Transverse colon (tissue), 4 donors: ENCODE measurements at regions of chr12 and their contacts with region 1.

Region 1: DNA sequence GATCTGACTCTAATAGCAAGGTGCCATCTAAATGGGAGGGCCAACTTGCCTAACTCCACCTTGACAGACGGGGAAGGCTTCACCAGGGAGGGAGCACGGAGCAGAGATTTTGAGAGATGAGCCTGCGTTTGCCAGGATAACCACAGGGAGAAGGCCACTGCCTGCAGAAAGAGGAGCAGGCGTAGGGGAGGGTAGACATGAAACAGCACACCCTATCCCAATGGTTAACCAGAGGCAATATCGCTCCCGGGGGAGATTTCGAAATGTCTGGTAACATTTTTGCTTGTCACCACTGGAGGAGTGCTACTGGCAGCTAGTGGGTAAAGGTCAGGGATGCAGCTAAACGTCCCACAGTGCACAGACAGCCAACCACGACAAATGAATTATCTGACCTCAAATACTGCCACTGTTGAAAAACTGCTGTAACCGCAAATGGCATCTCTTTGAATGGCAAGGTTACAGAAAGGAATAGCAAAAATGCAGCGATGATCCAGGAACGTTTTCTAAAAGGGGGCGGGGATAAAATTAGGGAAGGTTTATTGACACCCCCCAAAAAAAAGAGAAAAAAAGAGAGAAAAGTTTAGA is 126.0 kb upstream of the ATF7IP start:
- DNase-seq: no peak
- H3K4me3 ChIP-seq: no peak overlapping the region
- H3K27ac ChIP-seq: peak overlapping the region; percentile 28 to 54 (median 38)
- H3K4me1 ChIP-seq: peaks cover 0 to 8% (median 4%) of the 10 kb centered on the region in 4 donors
- H3K27me3 ChIP-seq: no peaks in the 10 kb centered on the region
- CTCF ChIP-seq: no peak
- EP300 ChIP-seq: no peak
- POLR2A ChIP-seq: no peak

Region 2: DNA sequence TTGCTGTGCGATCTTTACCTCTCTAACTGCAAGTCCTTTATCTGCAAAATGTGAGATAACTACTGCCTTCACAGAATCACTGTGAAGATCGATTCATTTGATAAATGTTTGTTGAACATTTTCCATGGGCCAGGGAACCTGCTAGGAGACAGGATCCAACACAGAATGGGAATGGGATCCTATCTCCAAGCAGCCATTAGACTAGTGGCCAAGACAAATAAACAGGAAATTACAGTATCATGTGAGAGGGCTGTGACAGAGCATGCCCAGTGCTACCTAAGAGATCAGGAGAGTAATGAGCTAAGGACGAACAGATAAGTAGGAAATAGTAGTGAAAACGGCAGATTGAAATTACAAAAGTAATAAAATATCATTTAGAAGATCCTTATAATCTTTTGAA is 363.7 kb before region 1 on chr12:
- in situ Hi-C with region 1: no loop called
- intact Hi-C with region 1: no loop called
- DNase-seq: no peak
- H3K4me3 ChIP-seq: no peak overlapping the region
- H3K27ac ChIP-seq: no peak overlapping the region
- H3K4me1 ChIP-seq: no peaks in the 10 kb centered on the region
- H3K27me3 ChIP-seq: no peaks in the 10 kb centered on the region
- CTCF ChIP-seq: no peak
- EP300 ChIP-seq: no peak
- POLR2A ChIP-seq: no peak

Region 3: DNA sequence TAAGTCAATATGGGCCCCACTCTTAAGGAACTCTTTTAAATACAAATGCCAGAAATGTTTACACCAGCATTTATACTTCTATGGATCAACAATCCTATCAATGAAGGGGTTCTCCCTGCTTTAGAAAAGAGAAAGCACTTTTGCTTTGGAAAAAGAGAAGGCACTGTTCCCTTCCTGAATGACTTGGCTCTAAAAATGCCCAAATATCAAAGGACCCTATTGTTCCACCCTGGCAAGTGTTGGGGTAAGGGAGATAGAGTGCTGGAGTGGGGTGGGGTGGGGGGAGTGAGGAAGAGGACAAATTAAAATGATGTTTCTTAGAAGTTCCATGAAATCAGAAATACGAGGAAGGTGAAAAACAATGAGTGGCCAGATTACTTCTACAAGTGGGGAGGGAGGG is 126.4 kb before region 1 on chr12:
- in situ Hi-C with region 1: no loop called
- intact Hi-C with region 1: no loop called
- DNase-seq: no peak
- H3K4me3 ChIP-seq: no peak overlapping the region
- H3K27ac ChIP-seq: no peak overlapping the region
- H3K4me1 ChIP-seq: no peaks in the 10 kb centered on the region
- H3K27me3 ChIP-seq: no peaks in the 10 kb centered on the region
- CTCF ChIP-seq: no peak
- EP300 ChIP-seq: no peak
- POLR2A ChIP-seq: no peak

Region 4: DNA sequence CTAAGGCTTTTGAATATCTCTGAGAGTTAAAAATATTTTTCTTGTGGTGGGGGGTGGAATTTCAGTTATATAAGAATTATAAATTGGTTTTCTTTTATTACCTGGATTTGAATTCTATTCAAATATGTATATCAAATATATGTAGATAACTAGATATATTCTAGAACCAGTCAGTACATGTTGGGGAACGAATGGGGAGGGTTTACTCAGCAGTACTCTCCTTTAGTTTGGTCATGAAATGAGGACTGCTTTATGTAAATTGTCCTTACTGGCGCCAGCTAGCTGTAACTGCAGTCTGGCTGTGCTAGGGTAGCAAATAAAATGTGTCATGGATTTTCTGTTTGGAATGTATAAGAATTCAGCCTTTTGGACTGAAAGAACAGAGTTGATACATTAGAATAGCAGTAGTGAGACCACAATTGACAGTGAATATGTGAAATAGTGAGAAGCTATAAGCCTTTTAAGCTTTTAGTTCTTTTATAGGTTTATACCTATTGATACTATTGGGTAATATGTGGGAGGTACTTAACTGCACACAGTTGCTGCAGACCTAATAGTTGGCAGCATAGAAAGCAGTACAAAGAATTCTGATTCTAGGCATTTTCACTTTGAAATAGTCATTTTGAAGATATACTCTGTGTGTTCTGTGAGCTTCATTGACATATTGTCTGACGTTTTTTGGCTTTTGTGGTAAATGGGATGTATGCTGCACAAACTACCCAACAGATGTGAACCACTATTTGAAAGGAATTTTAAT is 155.1 kb after region 1 on chr12:
- in situ Hi-C with region 1: no loop called
- intact Hi-C with region 1: no loop called
- DNase-seq: no peak
- H3K4me3 ChIP-seq: peak overlapping the region in 1 of 4 donors; percentile 6
- H3K27ac ChIP-seq: peak overlapping the region; percentile 62 to 72 (median 71)
- H3K4me1 ChIP-seq: peaks cover 0 to 38% (median 18%) of the 10 kb centered on the region in 4 donors
- H3K27me3 ChIP-seq: no peaks in the 10 kb centered on the region
- CTCF ChIP-seq: peak in 3 of 5 experiments; percentile 3 to 51 (median 23)
- EP300 ChIP-seq: no peak
- POLR2A ChIP-seq: no peak

Region 5: GRCh38 chr12:14422516-14423230 is 183.2 kb after region 1 on chr12:
- in situ Hi-C with region 1: loop called in 1 of 4 experiments (anchors 10 kb)
- intact Hi-C with region 1: no loop called
- DNase-seq: no peak
- H3K4me3 ChIP-seq: no peak overlapping the region
- H3K27ac ChIP-seq: no peak overlapping the region
- H3K4me1 ChIP-seq: peaks cover 0 to 37% (median 15%) of the 10 kb centered on the region in 4 donors
- H3K27me3 ChIP-seq: no peaks in the 10 kb centered on the region
- CTCF ChIP-seq: no peak
- EP300 ChIP-seq: no peak
- POLR2A ChIP-seq: no peak

Region 6: DNA sequence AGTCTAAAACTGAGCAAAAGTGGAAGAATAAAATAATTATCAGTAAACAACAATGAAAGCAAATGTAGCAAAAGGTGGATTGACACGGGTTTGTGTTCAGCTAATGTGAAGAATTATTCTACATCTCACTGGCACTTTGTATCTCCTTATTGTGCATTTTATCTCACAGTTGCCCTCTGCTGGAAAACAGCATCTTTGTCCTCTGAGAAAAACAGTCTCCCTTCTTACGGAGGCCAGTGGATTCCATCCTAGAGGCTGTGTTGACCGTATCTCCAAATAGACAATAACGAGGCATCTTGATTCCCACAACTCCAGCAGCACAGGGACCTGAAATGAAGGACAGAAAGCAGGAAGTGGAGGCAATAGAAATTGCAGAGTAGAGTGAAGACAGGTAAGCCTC is 379.5 kb after region 1 on chr12:
- in situ Hi-C with region 1: loop called in 3 of 4 experiments (anchors 10 to 25 kb)
- intact Hi-C with region 1: loop called (anchors 10 kb)
- DNase-seq: no peak
- H3K4me3 ChIP-seq: no peak overlapping the region
- H3K27ac ChIP-seq: peak overlapping the region; percentile 61 to 66 (median 62)
- H3K4me1 ChIP-seq: peaks cover 7 to 28% (median 20%) of the 10 kb centered on the region in 4 donors
- H3K27me3 ChIP-seq: no peaks in the 10 kb centered on the region
- CTCF ChIP-seq: peak; percentile 16 to 49 (median 28)
- EP300 ChIP-seq: no peak
- POLR2A ChIP-seq: no peak

Region 7: DNA sequence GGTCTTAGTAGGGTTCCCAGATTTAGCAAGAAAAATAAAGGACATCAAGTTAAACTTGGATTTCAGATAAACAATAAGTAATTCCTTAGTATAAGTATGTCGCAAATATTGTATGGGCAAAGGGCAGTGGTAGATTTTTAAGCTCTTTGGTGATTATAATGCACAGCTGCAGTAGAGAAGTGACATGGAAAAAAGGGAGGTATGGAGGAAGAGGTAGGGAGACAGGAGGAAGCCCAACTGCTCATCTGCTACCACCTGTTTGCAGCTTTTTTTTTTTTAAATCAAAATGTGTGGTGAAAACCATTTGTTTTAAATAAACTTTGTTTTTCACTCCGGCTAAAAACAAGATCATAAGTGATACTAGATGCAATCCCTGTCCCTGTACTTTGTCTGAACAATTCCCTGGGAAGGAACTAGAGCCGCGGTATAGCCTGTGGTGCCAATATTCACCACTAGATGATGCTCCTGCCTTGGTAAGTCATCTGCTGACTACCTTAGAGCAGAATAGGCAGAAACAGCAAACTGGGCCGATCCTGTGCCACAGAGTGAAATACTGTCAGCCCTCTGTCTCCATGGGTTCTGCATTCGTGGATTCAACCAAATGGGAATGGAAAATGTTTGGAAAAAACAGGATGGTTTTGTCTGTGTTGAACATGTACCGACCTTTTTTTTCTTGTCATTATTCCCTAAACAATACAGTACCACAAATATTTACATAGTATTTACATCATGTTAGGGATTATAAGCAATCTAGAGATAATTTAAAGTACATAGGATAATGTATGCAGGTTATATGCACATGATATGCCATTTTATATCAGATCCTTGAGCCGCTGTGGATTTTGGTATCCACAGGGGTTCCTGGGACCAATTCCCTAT is 390.6 kb after region 1 on chr12:
- in situ Hi-C with region 1: no loop called
- intact Hi-C with region 1: loop called (anchors 10 kb)
- DNase-seq: peak; percentile 84
- H3K4me3 ChIP-seq: no peak overlapping the region
- H3K27ac ChIP-seq: peak overlapping the region in 3 of 4 donors; percentile 45 to 57 (median 46)
- H3K4me1 ChIP-seq: peaks cover 0 to 23% (median 10%) of the 10 kb centered on the region in 4 donors
- H3K27me3 ChIP-seq: no peaks in the 10 kb centered on the region
- CTCF ChIP-seq: peak; percentile 91 to 96 (median 95)
- EP300 ChIP-seq: no peak
- POLR2A ChIP-seq: no peak

Region 8: GRCh38 chr12:14664510-14664909 is 425.1 kb after region 1 on chr12:
- in situ Hi-C with region 1: loop called in 1 of 4 experiments (anchors 25 kb)
- intact Hi-C with region 1: no loop called
- DNase-seq: peak; percentile 22
- H3K4me3 ChIP-seq: no peak overlapping the region
- H3K27ac ChIP-seq: no peak overlapping the region
- H3K4me1 ChIP-seq: peaks cover 0 to 4% (median 1%) of the 10 kb centered on the region in 4 donors
- H3K27me3 ChIP-seq: no peaks in the 10 kb centered on the region
- CTCF ChIP-seq: peak; percentile 61 to 76 (median 66)
- EP300 ChIP-seq: no peak
- POLR2A ChIP-seq: no peak